Activated T-helper 2 cell treated with anti-CD3 and anti-CD28 coated beads, Interferon-gamma antibody, Interleukin-2, Interleukin-4, amounts not matched to agents 10 μg/mL and 5 μg/mL and 100 μg/mL, durations not matched to agents 14 hours and 24 hours and 36 hours (primary cell): ENCODE measurements at regions of chr1 and their contacts with region 1.

Region 1: GRCh38 chr1:186330758-186331157 is 44.3 kb downstream of the TPR start:
- DNase-seq: no peak
- H3K4me3 Mint-ChIP-seq: no peak overlapping the region
- H3K27ac Mint-ChIP-seq: no peak overlapping the region
- H3K4me1 Mint-ChIP-seq: peaks cover 9% of the 10 kb centered on the region
- H3K27me3 Mint-ChIP-seq: no peaks in the 10 kb centered on the region

Region 2: DNA sequence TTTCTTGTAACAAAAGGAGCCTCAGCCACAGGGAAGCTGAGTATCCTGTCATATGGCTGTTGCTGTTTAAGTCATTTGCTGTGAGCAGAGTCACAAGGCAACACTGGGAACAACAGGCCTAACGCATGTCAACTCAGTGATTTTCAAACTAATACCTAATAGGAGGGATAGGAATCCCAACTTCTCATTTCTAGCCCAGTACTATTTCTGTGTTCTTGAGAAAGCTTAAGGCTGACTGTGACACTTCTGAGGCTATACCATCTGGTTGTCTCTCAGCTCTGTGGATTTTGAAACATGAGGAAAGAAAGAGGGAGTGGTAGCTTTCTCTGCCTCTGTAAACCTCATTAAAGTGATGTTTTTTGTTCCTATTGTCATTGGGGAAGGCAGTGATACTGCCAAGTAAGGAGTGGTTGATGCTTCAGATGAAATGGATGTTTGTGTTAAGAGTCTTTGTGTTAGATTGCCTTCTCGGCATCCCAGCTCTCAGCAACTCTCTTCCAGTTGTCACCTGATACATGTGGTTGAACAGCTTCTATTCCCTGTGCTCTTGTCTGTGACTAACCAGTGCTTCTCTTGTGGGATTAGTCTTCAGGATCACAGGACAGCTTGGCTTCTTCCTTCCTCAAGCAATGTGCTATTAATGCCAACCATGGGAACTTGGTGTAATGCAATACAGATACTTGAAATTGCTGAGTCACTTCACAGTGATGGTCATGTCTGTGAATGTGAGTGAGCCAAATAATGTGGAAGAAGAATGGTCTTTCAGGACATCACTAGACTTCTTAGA is 846.9 kb before region 1 on chr1:
- intact Hi-C with region 1: no loop called
- DNase-seq: no peak
- H3K4me3 Mint-ChIP-seq: no peak overlapping the region
- H3K27ac Mint-ChIP-seq: no peak overlapping the region
- H3K4me1 Mint-ChIP-seq: peaks cover 4% of the 10 kb centered on the region
- H3K27me3 Mint-ChIP-seq: no peaks in the 10 kb centered on the region

Region 3: GRCh38 chr1:186375088-186375953 is 44.6 kb after region 1 on chr1 and contains the starts of genes ODR4 and TPR:
- intact Hi-C with region 1: loop called (anchors 5 kb)
- DNase-seq: peak; percentile 97
- H3K4me3 Mint-ChIP-seq: peak within 1 kb of the TSS; percentile 96
- H3K27ac Mint-ChIP-seq: peak within 1 kb of the TSS; percentile 97
- H3K4me1 Mint-ChIP-seq: peaks cover 31% of the 10 kb centered on the region
- H3K27me3 Mint-ChIP-seq: no peaks in the 10 kb centered on the region
- total RNA-seq, gene ODR4: 16.1 and 17.0 TPM in 2 replicates
- total RNA-seq, gene TPR: 154 and 160 TPM in 2 replicates

Region 4: GRCh38 chr1:186550832-186551231 is 220.1 kb after region 1 on chr1:
- intact Hi-C with region 1: no loop called
- DNase-seq: no peak
- H3K4me3 Mint-ChIP-seq: no peak overlapping the region
- H3K27ac Mint-ChIP-seq: no peak overlapping the region
- H3K4me1 Mint-ChIP-seq: no peaks in the 10 kb centered on the region
- H3K27me3 Mint-ChIP-seq: no peaks in the 10 kb centered on the region